ENCODE measurements at regions of chr13 and their contacts with region 1.

Region 1: GRCh38 chr13:45310341-45311125 is 30.4 kb downstream of the TPT1 start:
- DNase-seq: no peak
- ATAC-seq: no peak
- H3K4me3 ChIP-seq: peak overlapping the region; percentile 8 to 64 (median 58)
- H3K27ac ChIP-seq: no peak overlapping the region
- H3K4me1 ChIP-seq: peaks cover 0 to 25% (median 18%) of the 10 kb centered on the region in 9 donors
- H3K27me3 ChIP-seq: peaks cover 0 to 7% (median 0%) of the 10 kb centered on the region in 7 donors
- CTCF ChIP-seq: no peak

Region 2: GRCh38 chr13:45047394-45048310 is 262.9 kb before region 1 on chr13:
- intact Hi-C with region 1: loop called (anchors 1 to 5 kb)
- DNase-seq: peak; percentile 44 to 77
- ATAC-seq: peak; percentile 70 to 92 (median 83)
- H3K4me3 ChIP-seq: peak overlapping the region; percentile 21 to 58 (median 50)
- H3K27ac ChIP-seq: peak overlapping the region in 6 of 10 donors; percentile 33 to 73 (median 54)
- H3K4me1 ChIP-seq: peaks cover 0 to 14% (median 8%) of the 10 kb centered on the region in 9 donors
- H3K27me3 ChIP-seq: no peaks in the 10 kb centered on the region
- CTCF ChIP-seq: peak; percentile 75 to 94 (median 81)

Region 3: DNA sequence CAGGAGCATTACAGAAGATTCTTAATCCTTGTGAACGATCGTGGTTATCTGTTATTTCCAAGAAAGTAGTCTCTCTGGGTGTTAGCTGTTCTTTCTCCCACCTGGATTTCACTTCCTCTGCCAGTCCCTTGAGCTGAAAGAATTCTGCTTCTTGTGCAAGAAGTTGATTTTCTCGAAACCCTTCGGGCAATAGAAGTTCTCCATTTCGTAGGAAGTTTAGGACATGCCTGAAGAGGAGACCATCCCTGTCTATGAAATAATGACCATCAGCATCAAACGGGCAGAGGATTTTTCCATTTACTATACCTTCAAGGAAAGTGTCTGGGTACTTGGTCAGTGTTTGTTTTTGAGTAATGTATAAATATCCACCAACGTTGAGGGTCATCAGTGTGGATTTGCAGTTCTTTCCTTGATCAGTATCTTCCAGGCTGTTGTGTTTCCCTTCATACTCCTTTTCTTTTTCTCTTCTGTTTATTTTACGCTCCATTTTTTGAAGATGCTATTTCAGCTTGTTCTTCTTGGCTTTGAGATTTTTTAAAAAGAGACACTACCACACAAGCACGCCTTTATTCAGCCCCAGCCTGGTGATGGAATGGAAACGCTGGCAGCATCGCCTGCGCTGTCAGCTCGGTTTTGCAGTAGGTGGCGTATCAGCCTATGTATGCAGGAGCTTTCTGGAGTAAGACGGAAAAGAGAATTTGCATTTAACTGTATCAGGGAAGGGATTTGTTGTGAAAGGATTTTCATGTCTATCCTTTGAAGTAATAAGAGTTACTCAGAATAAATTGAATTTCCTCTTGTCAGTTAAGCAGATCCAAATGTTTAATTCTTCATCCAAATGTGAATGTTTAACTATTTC is 116.2 kb before region 1 on chr13:
- intact Hi-C with region 1: loop called in 2 of 10 experiments (anchors 2 to 10 kb)
- DNase-seq: peak; percentile 23 to 39
- ATAC-seq: peak in 7 of 8 donors; percentile 59 to 83 (median 78)
- H3K4me3 ChIP-seq: peak overlapping the region in 2 of 10 donors; percentile 3 to 5
- H3K27ac ChIP-seq: no peak overlapping the region
- H3K4me1 ChIP-seq: peaks cover 0 to 44% (median 24%) of the 10 kb centered on the region in 9 donors
- H3K27me3 ChIP-seq: no peaks in the 10 kb centered on the region
- CTCF ChIP-seq: peak in 7 of 9 donors; percentile 27 to 59 (median 38)

Region 4: GRCh38 chr13:45340926-45341750 is 30.6 kb after region 1 on chr13 and contains the start of gene TPT1:
- intact Hi-C with region 1: loop called in 1 of 10 experiments (anchors 1 kb)
- DNase-seq: peak; percentile 99
- ATAC-seq: peak; percentile 91 to 97 (median 94)
- H3K4me3 ChIP-seq: peak within 1 kb of the TSS; percentile 75 to 99 (median 95)
- H3K27ac ChIP-seq: peak within 1 kb of the TSS; percentile 100
- H3K4me1 ChIP-seq: peaks cover 16 to 52% (median 49%) of the 10 kb centered on the region in 9 donors
- H3K27me3 ChIP-seq: no peaks in the 10 kb centered on the region
- CTCF ChIP-seq: no peak
- total RNA-seq, gene TPT1: 3,297 to 4,965 (median 3,717) TPM